Common myeloid progenitor, CD34-positive (primary cell): ENCODE measurements at regions of chr11 and their contacts with region 1.

Region 1: GRCh38 chr11:68839054-68839865 is 2.5 kb downstream of the CPT1A start:
- DNase-seq: peak; percentile 96 to 99 (median 98)
- H3K4me3 ChIP-seq: peak overlapping the region; percentile 40 to 95 (median 91)
- H3K27ac ChIP-seq: peak overlapping the region; percentile 83 to 89
- H3K4me1 ChIP-seq: peaks cover 20 to 79% (median 76%) of the 10 kb centered on the region in 4 experiments
- H3K27me3 ChIP-seq: no peaks in the 10 kb centered on the region

Region 2: GRCh38 chr11:68818138-68818537 is 21.1 kb before region 1 on chr11:
- CTCF ChIA-PET with region 1: interaction called, 11 read pairs
- POLR2A ChIA-PET with region 1: no interaction called
- DNase-seq: no peak
- H3K4me3 ChIP-seq: no peak overlapping the region
- H3K27ac ChIP-seq: no peak overlapping the region
- H3K4me1 ChIP-seq: peaks cover 0 to 16% (median 6%) of the 10 kb centered on the region in 4 experiments
- H3K27me3 ChIP-seq: no peaks in the 10 kb centered on the region

Region 3: GRCh38 chr11:68825571-68825970 is 13.7 kb before region 1 on chr11:
- CTCF ChIA-PET with region 1: interaction called, 90 read pairs
- POLR2A ChIA-PET with region 1: interaction called, 35 read pairs
- DNase-seq: peak; percentile 92 to 98 (median 97)
- H3K4me3 ChIP-seq: peak overlapping the region in 2 of 7 experiments; percentile 32 to 40
- H3K27ac ChIP-seq: peak overlapping the region; percentile 68 to 93
- H3K4me1 ChIP-seq: peaks cover 8 to 68% (median 64%) of the 10 kb centered on the region in 4 experiments
- H3K27me3 ChIP-seq: no peaks in the 10 kb centered on the region

Region 4: DNA sequence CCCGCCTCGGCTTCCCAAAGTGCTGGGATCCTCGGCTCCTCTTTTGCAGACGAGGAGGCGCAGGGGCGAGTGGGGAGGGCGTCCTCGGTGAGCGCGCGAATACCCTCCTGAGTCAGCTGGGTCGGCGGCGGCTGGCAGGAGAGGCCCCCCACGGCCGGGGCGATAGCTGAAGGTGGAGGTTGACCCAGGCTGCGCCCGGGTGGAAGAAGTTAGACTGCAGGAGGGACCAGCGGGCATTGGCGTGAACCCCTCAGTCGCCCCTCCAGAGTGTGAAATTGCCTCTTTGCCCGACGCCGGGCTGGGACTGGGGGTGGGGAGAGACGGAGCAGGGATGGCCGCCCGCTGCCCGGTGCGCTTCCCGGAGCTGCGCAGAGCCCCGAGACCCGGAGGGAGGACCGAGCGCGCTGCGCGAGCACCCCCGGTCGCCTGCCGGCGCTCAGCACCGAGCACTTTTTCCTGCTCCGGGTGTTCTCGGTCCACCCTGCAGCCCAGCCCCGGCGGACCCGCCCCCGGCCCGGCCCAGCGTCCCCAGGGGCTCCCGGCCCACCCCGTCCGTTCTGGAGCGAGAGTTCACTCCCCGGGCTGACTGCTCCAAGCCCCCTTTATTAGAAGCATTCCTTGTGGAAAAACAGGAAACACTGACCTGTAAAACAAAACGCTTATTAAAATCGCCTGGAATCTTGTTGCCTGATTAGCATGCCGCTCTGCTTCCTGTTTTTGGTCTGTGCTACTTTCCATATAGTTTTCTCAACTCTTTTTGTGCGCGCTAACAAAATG is 16.1 kb after region 1 on chr11:
- CTCF ChIA-PET with region 1: interaction called, 26 read pairs
- POLR2A ChIA-PET with region 1: interaction called, 4 read pairs
- DNase-seq: peak in 2 of 3 donors; percentile 71 to 79
- H3K4me3 ChIP-seq: peak overlapping the region; percentile 57 to 86 (median 77)
- H3K27ac ChIP-seq: no peak overlapping the region
- H3K4me1 ChIP-seq: peaks cover 0 to 17% (median 15%) of the 10 kb centered on the region in 4 experiments
- H3K27me3 ChIP-seq: peaks cover 0 to 7% (median 0%) of the 10 kb centered on the region in 5 experiments

Region 5: DNA sequence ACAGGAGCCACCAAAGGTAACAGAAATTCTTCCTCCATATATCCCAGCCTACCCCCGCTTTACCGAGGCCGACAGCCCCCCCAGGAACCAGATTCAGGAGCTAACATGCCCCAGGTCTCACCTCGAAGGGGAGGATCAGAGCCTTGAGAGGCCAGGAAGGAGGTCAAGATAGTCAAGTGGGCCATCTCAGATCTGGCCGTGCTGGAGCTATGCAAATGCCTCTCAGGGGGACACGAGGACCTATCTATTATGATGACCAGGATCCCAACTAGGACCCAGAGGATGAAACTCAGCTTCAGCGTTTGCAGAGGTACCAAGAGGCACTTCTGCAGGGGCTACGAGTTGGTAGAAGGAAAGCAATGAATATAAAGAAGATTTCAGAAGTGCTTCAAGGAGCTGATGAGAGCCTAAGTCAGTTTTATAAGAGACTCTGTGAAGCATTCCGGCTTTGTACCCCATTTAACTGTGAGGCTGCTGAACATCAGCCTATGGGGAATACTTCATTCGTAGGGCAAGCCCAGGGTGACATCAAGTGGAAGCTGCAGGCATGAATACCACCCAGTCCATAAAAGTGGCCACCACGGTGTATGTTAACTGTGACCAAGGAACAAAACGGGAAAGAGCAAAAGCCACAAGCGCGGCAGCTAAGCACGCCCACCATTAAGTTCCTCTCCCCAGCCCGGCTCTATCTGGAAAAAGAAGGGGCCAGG is 30.1 kb after region 1 on chr11:
- CTCF ChIA-PET with region 1: interaction called, 21 read pairs
- POLR2A ChIA-PET with region 1: no interaction called
- DNase-seq: peak; percentile 69 to 77 (median 75)
- H3K4me3 ChIP-seq: peak overlapping the region in 6 of 7 experiments; percentile 62 to 89 (median 70)
- H3K27ac ChIP-seq: no peak overlapping the region
- H3K4me1 ChIP-seq: peaks cover 0 to 24% (median 16%) of the 10 kb centered on the region in 4 experiments
- H3K27me3 ChIP-seq: no peaks in the 10 kb centered on the region